ENCODE measurements at regions of chr5 and their contacts with region 1.

Region 1: DNA sequence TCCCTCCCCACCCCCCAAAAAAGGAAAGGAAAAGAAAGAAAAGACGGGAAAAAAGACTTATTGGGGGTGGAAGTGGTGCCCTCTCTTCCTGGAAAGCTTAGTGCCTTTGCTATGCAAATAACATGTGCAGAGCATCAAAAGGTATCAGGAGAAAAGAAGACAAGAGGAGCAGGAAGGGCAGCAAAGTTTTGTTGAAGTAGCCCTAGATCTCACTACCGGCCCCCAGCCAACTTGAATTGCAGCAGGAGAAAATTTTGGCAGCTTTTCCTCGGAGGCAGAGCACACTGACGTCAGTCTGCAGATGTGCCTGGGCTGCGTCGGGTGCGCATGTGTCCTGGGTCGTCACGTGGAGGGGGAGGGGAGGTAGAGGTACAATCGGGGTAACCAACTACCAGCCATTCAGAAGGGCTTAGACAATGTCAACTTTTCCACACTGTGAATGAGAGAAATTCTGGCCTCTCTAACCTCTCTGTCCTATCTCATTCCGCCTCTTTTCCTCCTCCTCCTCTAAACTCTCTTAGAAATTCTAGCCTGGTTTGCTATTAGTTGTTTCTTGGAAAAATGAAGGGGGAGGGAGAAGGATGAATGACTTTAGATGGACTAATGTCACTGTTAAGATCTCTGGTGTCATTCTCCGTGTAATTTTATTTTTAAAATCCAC is at the start of gene ADAMTS6:
- DNase-seq: no peak
- ATAC-seq: peak; percentile 83
- H3K4me3 ChIP-seq: peak within 1 kb of the TSS; percentile 58 to 70
- H3K27ac ChIP-seq: peak within 1 kb of the TSS; percentile 6; the same call in 1 of the 2 replicates
- H3K4me1 ChIP-seq: peaks cover 9% of the 10 kb centered on the region
- H3K27me3 ChIP-seq: peaks cover 21% of the 10 kb centered on the region
- CTCF ChIP-seq: no peak
- total RNA-seq, gene ADAMTS6: 0.64 TPM

Region 2: DNA sequence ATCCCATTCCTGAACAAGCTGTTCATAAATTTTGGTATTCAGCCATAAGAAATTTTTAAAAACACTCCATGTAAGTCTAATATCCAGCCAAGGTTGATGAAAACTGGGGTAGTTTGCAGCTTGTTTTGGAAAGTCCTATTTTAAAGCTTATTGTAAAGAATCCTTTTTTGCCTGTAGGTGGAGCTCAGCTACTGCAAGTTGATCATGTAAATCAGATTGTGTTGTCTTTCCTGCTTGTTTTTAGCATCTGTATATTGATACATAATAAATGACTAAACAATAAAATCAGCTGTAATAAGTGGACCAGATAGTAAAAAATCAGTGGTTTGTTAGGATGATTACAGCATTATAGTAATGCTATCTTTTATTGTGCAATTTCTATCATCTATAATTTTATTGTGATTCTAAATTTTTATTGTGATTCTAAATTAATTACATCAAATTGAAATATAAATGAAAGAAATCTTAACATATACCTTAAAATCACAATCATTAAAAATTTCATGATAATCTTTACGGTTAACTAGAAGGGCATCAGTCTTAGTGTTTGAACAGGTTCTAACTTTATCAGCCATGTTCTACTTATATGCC is 670.6 kb before region 1 on chr5:
- CTCF ChIA-PET with region 1: interaction called, 11 read pairs
- POLR2A ChIA-PET with region 1: interaction called, 3 read pairs
- in situ Hi-C with region 1: no loop called
- intact Hi-C with region 1: loop called (anchors 1 kb)
- DNase-seq: peak; percentile 27
- ATAC-seq: peak; percentile 66; the same call in 1 of the 2 replicates
- H3K4me3 ChIP-seq: no peak overlapping the region
- H3K27ac ChIP-seq: no peak overlapping the region
- H3K4me1 ChIP-seq: no peaks in the 10 kb centered on the region
- H3K27me3 ChIP-seq: no peaks in the 10 kb centered on the region
- CTCF ChIP-seq: peak; percentile 70; the same call in 1 of the 2 replicates

Region 3: DNA sequence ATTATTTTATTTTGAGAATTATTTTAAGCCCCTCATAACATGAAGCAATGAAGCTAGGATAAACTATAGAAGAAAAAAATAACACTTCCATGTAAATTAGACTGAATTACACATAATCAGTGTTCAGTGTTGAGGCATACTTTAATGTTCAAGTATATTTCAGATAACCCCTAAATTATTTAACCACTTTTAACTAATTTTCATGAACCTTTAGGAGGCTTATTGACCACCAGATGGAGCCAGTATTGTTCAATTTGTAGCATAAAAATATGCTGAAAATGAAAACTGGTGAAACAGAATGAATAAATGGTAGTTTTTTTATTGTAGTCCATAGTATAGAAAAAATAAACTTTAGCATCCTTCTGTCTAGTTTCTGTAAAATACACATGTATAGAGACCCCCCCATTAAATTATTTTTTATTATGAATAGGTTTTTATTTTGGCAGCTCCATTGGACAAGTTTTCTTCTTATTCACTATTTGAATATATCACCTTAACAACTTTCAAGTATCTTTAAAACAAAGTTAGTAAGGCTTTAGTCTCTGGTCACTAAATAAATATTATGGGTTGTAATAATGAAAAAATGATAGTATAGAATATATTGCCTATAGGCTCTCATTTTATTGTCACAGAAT is 522.9 kb before region 1 on chr5:
- CTCF ChIA-PET with region 1: no interaction called
- POLR2A ChIA-PET with region 1: no interaction called
- in situ Hi-C with region 1: no loop called
- intact Hi-C with region 1: loop called (anchors 5 kb)
- DNase-seq: no peak
- ATAC-seq: no peak
- H3K4me3 ChIP-seq: no peak overlapping the region
- H3K27ac ChIP-seq: no peak overlapping the region
- H3K4me1 ChIP-seq: no peaks in the 10 kb centered on the region
- H3K27me3 ChIP-seq: no peaks in the 10 kb centered on the region
- CTCF ChIP-seq: peak; percentile 47; the same call in 1 of the 2 replicates

Region 4: GRCh38 chr5:65100911-65101631 is 380.7 kb before region 1 on chr5:
- CTCF ChIA-PET with region 1: interaction called, 4 read pairs
- POLR2A ChIA-PET with region 1: no interaction called
- in situ Hi-C with region 1: no loop called
- intact Hi-C with region 1: loop called (anchors 1 kb)
- DNase-seq: peak; percentile 38
- ATAC-seq: peak; percentile 75
- H3K4me3 ChIP-seq: no peak overlapping the region
- H3K27ac ChIP-seq: no peak overlapping the region
- H3K4me1 ChIP-seq: peaks cover 3% of the 10 kb centered on the region; the same call in 1 of the 2 replicates
- H3K27me3 ChIP-seq: 0 out of 2 replicates have a peak, but pooled peaks cover 2% of the 10 kb centered on the region
- CTCF ChIP-seq: peak; percentile 81

Region 5: GRCh38 chr5:65506961-65507360 is 25.2 kb after region 1 on chr5:
- CTCF ChIA-PET with region 1: no interaction called
- POLR2A ChIA-PET with region 1: no interaction called
- in situ Hi-C with region 1: no loop called
- intact Hi-C with region 1: no loop called
- DNase-seq: no peak
- ATAC-seq: no peak
- H3K4me3 ChIP-seq: no peak overlapping the region
- H3K27ac ChIP-seq: no peak overlapping the region
- H3K4me1 ChIP-seq: no peaks in the 10 kb centered on the region
- H3K27me3 ChIP-seq: no peaks in the 10 kb centered on the region
- CTCF ChIP-seq: no peak

Region 6: GRCh38 chr5:65624571-65625555 is 143.1 kb after region 1 on chr5 and contains the starts of genes SHLD3 and TRAPPC13:
- CTCF ChIA-PET with region 1: no interaction called
- POLR2A ChIA-PET with region 1: no interaction called
- in situ Hi-C with region 1: no loop called
- intact Hi-C with region 1: no loop called
- DNase-seq: peak; percentile 93
- ATAC-seq: peak; percentile 89
- H3K4me3 ChIP-seq: peak within 1 kb of the TSS; percentile 82 to 98
- H3K27ac ChIP-seq: peak within 1 kb of the TSS; percentile 99
- H3K4me1 ChIP-seq: peaks cover 9% of the 10 kb centered on the region
- H3K27me3 ChIP-seq: no peaks in the 10 kb centered on the region
- CTCF ChIP-seq: no peak
- total RNA-seq, gene SHLD3: 3.3 TPM
- total RNA-seq, gene TRAPPC13: 17.3 TPM

Region 7: GRCh38 chr5:66312291-66312690 is 830.5 kb after region 1 on chr5:
- CTCF ChIA-PET with region 1: no interaction called
- POLR2A ChIA-PET with region 1: no interaction called
- in situ Hi-C with region 1: no loop called
- intact Hi-C with region 1: no loop called
- DNase-seq: no peak
- ATAC-seq: no peak
- H3K4me3 ChIP-seq: no peak overlapping the region
- H3K27ac ChIP-seq: no peak overlapping the region
- H3K4me1 ChIP-seq: no peaks in the 10 kb centered on the region
- H3K27me3 ChIP-seq: no peaks in the 10 kb centered on the region
- CTCF ChIP-seq: no peak

Region 8: GRCh38 chr5:66747607-66748006 is 1265.8 kb after region 1 on chr5:
- CTCF ChIA-PET with region 1: no interaction called
- POLR2A ChIA-PET with region 1: no interaction called
- in situ Hi-C with region 1: no loop called
- intact Hi-C with region 1: no loop called
- DNase-seq: no peak
- ATAC-seq: no peak
- H3K4me3 ChIP-seq: no peak overlapping the region
- H3K27ac ChIP-seq: no peak overlapping the region
- H3K4me1 ChIP-seq: no peaks in the 10 kb centered on the region
- H3K27me3 ChIP-seq: peaks cover 4% of the 10 kb centered on the region
- CTCF ChIP-seq: no peak